Sciatic nerve (tissue), 2 donors: ENCODE measurements at regions of chr7 and their contacts with region 1.

Region 1: DNA sequence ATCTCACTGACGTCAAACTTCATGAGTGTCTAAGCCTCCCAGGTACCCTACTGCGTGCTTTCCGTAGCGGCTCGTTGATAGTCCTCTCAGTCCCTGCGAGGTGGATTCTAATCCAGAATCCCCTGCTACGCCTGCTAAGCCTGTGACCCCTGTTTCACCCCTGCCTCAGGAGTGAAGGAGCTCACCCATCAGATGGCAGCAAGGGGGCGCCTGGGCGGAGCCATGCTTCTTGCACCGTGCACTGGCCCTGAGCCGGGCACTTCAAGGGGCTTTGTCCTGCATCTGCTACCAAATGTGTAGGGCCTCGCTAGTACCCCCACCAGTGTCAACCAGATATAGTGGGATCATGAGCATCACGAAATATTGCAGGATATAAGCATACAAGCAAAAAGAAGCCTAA is 918 bp upstream of the STRA8 start:
- DNase-seq: no peak
- ATAC-seq: no peak

Region 2: GRCh38 chr7:135486261-135486920 is 253.7 kb after region 1 on chr7:
- intact Hi-C with region 1: no loop called
- DNase-seq: no peak
- ATAC-seq: no peak

Region 3: DNA sequence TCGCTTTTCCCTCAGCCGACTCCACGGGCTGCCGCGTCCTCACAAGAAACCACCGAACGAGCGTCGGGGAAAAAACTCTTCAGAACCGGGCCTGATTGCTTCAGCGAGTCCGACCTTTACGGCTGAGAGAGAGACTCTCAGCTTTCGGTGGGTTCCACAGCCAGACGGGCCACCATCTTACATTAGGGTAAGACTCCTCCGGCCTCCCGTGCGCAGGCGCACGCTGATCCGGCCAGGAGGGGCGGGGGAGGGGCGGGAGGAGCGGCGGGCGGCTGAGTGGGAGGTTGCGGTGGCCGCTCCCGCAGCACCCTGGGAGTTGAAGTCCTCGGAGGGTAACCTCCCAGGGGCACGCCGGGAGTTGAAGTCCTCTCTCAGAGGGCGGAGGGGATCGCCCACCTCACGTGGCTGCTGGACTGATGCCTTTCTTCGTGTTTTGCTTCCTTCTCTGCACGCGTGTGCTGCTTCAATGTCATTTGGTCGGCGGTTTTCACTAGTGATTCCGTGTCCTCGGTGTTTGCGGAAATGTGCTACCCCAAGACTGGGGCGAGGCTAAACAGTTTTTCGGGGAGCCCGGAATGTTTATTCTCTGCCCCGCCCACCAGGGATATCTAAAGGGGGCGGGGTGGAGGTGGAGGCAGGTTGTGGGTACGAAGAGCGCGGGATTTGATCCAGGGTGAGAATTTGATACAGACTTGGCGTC is 277.3 kb after region 1 on chr7 and contains the start of gene CNOT4:
- intact Hi-C with region 1: no loop called
- DNase-seq: peak; percentile 97
- ATAC-seq: peak; percentile 99
- total RNA-seq, gene CNOT4: 42.9 TPM

Region 4: GRCh38 chr7:135942614-135943013 is 709.9 kb after region 1 on chr7:
- intact Hi-C with region 1: loop called (anchors 5 kb)
- DNase-seq: no peak
- ATAC-seq: no peak